Activated CD8-positive, alpha-beta T cell treated with anti-CD3 and anti-CD28 coated beads, Interleukin-2, amount 10 ng/mL, durations not matched to agents 7 days and 5 days (primary cell): ENCODE measurements at regions of chr12 and their contacts with region 1.

Region 1: DNA sequence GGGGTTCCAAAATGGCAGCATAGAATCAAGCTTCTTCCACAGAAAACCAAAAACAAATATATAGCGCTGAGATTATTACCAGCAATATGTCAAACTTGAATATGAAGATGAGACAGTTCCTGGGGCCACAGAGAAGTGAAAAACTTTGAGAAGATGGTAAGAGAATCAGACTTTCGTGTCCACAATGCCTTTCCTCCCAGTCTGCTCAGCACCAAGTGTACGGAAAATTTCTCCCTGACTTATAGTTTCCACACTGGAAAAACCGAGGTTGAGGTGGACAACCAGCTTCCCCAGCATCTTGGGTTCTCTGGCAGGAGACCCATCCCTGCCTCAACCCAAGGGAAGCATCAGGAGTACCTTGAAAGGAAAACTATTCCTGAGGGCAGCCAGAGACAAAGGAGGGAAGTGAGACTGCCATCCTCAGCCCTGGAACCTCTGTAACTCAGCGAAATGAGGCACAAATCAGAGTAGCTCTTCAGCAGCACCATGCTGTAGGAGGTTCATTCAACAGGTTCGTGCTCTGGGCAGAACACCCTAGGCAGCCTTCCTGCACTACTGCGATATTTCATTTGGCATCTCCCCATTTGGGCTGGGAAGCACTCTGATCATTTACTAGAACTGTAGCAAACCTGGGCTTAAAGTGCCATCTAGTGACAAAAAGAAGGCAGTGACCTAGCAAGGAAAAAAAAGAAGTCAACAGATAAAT is 52.4 kb upstream of the CAPRIN2 start:
- DNase-seq: peak; percentile 30
- ATAC-seq: peak; percentile 60
- H3K4me3 Mint-ChIP-seq: no peak overlapping the region
- H3K27ac Mint-ChIP-seq: no peak overlapping the region
- H3K4me1 Mint-ChIP-seq: no peaks in the 10 kb centered on the region
- H3K27me3 Mint-ChIP-seq: peaks cover 30% of the 10 kb centered on the region

Region 2: DNA sequence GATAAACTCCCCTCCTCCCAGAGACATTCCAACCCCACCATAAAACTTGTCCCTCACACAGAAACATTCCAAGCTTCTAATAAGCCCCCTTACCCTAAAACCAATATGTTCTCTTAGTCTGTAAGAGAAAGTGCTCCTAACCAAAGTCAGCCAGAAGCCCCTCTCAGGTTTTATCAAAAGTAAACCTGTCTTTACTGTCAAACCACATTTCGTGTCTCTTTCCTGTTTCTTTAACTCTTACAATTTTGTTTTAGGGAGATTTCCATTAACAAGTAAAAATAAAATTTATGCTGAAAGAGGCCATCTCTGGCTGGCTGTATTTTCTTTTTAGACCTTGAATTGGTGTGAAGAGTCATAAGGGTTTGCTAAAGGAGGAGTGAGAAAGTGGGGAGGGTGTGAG is 22.6 kb before region 1 on chr12:
- CTCF ChIA-PET with region 1: no interaction called
- POLR2A ChIA-PET with region 1: no interaction called
- DNase-seq: no peak
- ATAC-seq: no peak
- H3K4me3 Mint-ChIP-seq: no peak overlapping the region
- H3K27ac Mint-ChIP-seq: no peak overlapping the region
- H3K4me1 Mint-ChIP-seq: no peaks in the 10 kb centered on the region
- H3K27me3 Mint-ChIP-seq: peaks cover 30% of the 10 kb centered on the region

Region 3: DNA sequence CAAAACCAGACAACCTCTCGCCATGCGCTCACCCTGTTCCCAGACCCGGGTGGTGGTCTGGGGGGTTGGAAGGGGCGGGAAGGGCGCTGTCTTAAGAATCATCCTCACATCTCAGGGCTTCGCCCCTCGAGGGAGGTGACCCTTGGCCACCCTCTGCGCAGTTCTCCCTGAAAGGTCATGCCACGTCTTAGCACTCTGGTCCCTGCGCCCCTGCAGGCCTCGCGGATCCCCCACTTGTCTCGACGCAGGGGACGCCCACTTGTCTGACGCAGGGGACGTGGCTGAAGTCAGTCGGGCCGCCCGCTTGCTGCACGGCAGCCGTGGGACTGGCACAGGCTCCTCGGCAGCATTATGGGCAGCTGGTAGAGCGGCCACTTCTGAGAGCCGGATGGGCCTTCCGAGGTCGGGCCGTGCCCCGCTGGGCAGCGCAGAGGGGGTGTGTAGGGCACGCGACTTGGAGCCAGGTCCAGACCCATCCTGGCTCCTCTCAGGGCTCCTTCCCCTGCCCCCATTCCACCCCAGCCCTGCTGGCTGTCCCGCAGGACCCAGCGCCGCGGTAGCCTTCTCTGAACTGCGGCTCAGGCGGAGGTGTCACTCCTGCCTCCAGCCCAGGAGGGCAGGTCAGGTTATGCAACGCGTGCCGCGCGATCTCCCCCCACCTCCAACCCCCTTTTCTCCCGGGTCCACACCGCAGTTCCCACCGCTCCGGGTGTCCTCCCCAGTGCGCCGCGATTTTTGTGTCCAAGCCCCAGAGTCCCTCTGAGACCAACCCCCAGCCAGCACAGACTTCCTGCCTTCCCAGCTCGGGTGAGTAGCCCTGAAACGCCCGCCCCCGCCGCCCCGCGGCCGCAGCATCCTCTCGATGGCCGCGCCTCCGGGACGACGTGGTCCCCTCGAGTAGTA is 11.5 kb before region 1 on chr12:
- CTCF ChIA-PET with region 1: interaction called, 12 read pairs
- POLR2A ChIA-PET with region 1: no interaction called
- DNase-seq: peak; percentile 81
- ATAC-seq: peak; percentile 89
- H3K4me3 Mint-ChIP-seq: peak overlapping the region; percentile 80
- H3K27ac Mint-ChIP-seq: peak overlapping the region; percentile 77
- H3K4me1 Mint-ChIP-seq: peaks cover 27% of the 10 kb centered on the region
- H3K27me3 Mint-ChIP-seq: peaks cover 46% of the 10 kb centered on the region